Sigmoid colon (tissue), 7 donors: ENCODE measurements at regions of chr17 and their contacts with region 1.

Region 1: DNA sequence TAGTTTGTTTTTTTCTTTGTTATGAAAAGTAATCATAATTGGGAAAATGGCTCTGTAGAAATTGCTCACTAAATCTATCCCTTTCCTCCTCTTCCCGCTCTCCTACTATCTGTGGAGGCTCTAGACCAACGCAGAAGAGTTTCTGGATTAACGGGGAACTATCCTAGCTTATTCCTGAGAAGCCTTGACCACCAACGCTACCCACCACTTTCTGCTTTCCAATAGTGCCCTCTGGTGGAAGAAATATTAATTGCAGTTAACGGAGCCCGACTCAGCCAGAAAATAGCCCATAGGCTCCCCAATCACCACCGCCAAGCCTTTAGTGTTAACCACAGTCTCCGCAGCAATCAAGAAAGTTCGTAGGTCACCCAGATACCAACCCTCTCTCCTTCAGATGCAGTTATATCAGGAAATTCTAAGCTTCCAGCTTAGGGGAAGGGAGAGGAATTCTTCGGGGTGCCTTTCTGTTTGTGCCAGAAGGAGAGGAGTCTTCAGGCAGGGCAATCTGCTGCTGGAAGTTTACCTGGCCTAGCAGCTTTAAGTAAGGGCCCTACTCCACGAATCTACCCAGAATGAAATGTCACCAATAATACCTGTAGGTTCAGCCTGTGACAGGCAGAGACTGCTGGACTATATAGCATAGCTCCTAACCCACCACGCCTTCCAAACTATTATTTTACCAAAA is 23.0 kb upstream of the NSRP1 start:
- DNase-seq: no peak
- H3K4me3 ChIP-seq: no peak overlapping the region
- H3K27ac ChIP-seq: no peak overlapping the region
- H3K4me1 ChIP-seq: peaks cover 0 to 15% (median 0%) of the 10 kb centered on the region in 4 donors
- H3K27me3 ChIP-seq: peaks cover 0 to 16% (median 0%) of the 10 kb centered on the region in 3 donors
- CTCF ChIP-seq: peak; percentile 32 to 80 (median 70)
- EP300 ChIP-seq: no peak
- POLR2A ChIP-seq: no peak

Region 2: GRCh38 chr17:29807520-29808351 is 285.9 kb before region 1 on chr17:
- intact Hi-C with region 1: loop called (anchors 2 kb)
- DNase-seq: no peak
- H3K4me3 ChIP-seq: no peak overlapping the region
- H3K27ac ChIP-seq: no peak overlapping the region
- H3K4me1 ChIP-seq: peaks cover 0 to 3% (median 0%) of the 10 kb centered on the region in 4 donors
- H3K27me3 ChIP-seq: no peaks in the 10 kb centered on the region
- CTCF ChIP-seq: peak in 3 of 4 experiments; percentile 48 to 69 (median 67)
- EP300 ChIP-seq: no peak
- POLR2A ChIP-seq: no peak

Region 3: DNA sequence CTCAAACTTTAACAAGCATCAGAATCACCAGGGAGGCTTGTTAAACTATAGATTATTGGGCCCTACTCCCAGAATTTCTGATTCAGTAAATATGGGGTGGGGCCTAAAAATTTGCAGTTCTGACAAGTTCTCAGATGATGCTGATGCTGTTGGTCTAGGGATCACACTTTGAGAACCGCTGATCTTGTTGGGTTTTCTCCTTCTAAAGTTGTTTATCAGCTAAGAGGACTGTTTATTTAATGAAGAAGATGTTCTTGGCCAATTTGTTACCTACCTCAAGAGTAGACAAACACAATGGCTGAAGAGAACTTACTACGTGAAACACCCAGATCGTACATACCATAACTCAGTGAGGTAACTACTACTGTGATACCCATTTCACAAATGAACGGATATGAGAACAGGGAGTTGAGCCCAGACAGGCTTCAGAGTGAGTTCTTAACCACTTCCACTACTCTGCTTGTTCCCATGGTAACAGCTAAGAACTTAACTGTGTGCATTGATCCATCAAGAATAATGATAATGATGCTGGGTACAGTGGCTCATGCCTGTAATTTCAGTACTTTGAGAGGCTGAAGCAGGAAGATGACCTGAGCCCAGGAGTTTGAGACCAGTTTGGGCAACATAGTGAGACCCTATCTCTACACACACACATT is 62.3 kb before region 1 on chr17:
- intact Hi-C with region 1: no loop called
- DNase-seq: no peak
- H3K4me3 ChIP-seq: no peak overlapping the region
- H3K27ac ChIP-seq: no peak overlapping the region
- H3K4me1 ChIP-seq: no peaks in the 10 kb centered on the region
- H3K27me3 ChIP-seq: no peaks in the 10 kb centered on the region
- CTCF ChIP-seq: no peak
- EP300 ChIP-seq: no peak
- POLR2A ChIP-seq: no peak

Region 4: GRCh38 chr17:30323895-30324319 is 230.3 kb after region 1 on chr17:
- intact Hi-C with region 1: no loop called
- DNase-seq: no peak
- H3K4me3 ChIP-seq: no peak overlapping the region
- H3K27ac ChIP-seq: no peak overlapping the region
- H3K4me1 ChIP-seq: peaks cover 0 to 2% (median 0%) of the 10 kb centered on the region in 4 donors
- H3K27me3 ChIP-seq: no peaks in the 10 kb centered on the region
- CTCF ChIP-seq: no peak
- EP300 ChIP-seq: no peak
- POLR2A ChIP-seq: no peak